Heart left ventricle (tissue), 16 donors: ENCODE measurements at regions of chr15 and their contacts with region 1.

Region 1: DNA sequence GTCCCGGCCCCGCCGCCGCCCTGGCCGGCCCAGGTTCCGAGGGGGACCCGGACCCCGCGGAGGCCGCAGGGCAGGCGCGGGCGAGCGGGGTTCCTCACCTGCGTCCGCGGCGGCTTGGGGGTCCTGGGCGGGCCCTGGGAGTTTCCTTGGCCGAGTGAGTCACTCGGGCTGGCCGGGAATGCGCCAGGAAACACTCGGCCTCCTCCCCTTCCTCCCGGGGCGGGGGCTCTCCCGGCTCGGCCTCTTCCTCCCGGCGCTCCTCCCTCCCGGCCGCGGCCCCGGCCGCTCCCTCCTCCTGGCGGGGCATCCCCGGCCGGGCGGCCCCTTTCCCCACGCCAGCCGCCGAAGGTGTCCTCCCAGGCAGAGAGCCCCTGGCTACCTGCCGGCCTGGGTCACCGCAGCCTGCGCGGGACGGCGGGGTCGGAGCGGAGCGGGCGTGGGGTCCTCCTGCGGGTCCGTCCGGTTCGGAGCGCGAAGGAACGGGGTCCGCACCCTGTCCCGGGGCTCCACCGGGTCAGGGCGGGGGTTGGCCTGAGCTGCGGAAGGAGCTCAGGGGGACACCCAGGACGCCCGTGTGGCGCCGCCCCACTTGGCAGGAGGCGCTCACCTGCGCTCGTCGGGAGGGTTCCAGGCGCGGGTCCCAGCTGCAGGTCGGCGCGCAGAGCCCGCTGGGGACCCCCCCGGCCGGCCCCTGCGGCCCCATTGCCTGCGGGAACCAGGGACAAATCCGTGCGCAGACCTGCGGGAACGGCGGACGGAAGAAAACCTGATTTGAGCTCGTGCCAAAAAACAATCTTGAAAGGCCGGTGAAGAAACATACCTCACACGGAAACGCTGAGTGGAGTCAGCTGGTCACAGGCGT is at the start of gene CYFIP1:
- DNase-seq: peak; percentile 90 to 93 (median 92)
- ATAC-seq: peak; percentile 94 to 97 (median 97)
- H3K4me3 ChIP-seq: peak within 1 kb of the TSS; percentile 70 to 99 (median 88)
- H3K27ac ChIP-seq: peak within 1 kb of the TSS; percentile 73 to 92 (median 86)
- H3K4me1 ChIP-seq: peaks cover 0 to 24% (median 9%) of the 10 kb centered on the region in 12 donors
- H3K27me3 ChIP-seq: no peaks in the 10 kb centered on the region
- CTCF ChIP-seq: no peak
- POLR2A ChIP-seq: peak in 1 of 2 donors; percentile 69
- total RNA-seq, gene CYFIP1: 23.4 to 111 (median 34.6) TPM

Region 2: DNA sequence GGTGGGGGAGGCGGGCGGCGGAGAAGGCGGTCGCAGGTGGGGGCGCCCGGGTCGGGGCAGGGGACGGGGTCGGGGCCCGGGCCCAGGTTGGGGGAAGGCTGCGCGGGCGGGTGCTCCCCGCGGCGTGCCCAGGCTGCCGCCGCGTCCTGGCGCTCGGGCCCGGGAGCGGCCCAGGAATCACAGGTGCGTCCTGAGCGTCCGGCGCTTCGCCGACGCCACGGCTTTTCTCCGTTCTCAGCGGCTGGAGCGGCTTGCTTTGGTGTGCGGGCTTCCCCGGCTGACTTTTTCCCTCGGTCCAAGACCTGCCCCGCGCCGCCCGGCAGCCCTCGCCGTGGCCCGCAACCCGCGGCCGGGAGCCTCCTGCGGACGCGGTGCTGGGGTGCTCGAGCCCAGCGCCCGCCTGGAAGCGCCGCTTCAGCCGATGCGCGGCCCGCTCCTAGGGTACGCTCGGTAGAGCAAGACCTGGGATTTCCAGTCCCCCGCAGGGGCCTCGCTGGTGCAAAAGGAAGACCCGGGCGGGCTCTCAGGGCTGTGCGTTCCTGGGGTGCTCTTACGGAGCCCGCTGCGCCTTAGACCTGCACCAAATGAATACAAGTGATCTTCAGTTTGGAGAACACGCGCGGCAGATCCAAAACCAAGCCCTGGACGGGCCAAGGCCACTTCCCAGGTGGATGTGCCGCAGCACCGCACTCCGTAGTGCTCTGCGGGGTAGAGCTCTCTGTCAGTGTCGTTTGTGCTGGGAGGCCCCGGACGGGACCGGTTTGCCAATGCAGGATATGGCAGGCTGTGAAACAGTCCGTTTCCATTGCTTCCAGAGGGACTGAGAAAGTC is 193.3 kb before region 1 on chr15:
- intact Hi-C with region 1: loop called in 1 of 10 experiments (anchors 10 kb)
- DNase-seq: peak in 4 of 5 donors; percentile 16 to 35 (median 26)
- ATAC-seq: peak in 3 of 4 donors; percentile 27 to 32 (median 29)
- H3K4me3 ChIP-seq: peak overlapping the region; percentile 62 to 97 (median 78)
- H3K27ac ChIP-seq: peak overlapping the region; percentile 53 to 97 (median 90)
- H3K4me1 ChIP-seq: peaks cover 0 to 15% (median 4%) of the 10 kb centered on the region in 12 donors
- H3K27me3 ChIP-seq: no peaks in the 10 kb centered on the region
- CTCF ChIP-seq: no peak
- POLR2A ChIP-seq: no peak

Region 3: GRCh38 chr15:22949074-22949547 is 31.3 kb before region 1 on chr15:
- intact Hi-C with region 1: loop called in 7 of 10 experiments (anchors 2 to 5 kb)
- DNase-seq: peak; percentile 72 to 89 (median 81)
- ATAC-seq: peak; percentile 67 to 91 (median 84)
- H3K4me3 ChIP-seq: peak overlapping the region in 8 of 12 donors; percentile 7 to 46 (median 26)
- H3K27ac ChIP-seq: peak overlapping the region in 11 of 12 donors; percentile 40 to 80 (median 65)
- H3K4me1 ChIP-seq: peaks cover 10 to 72% (median 51%) of the 10 kb centered on the region in 12 donors
- H3K27me3 ChIP-seq: no peaks in the 10 kb centered on the region
- CTCF ChIP-seq: no peak
- POLR2A ChIP-seq: no peak

Region 4: DNA sequence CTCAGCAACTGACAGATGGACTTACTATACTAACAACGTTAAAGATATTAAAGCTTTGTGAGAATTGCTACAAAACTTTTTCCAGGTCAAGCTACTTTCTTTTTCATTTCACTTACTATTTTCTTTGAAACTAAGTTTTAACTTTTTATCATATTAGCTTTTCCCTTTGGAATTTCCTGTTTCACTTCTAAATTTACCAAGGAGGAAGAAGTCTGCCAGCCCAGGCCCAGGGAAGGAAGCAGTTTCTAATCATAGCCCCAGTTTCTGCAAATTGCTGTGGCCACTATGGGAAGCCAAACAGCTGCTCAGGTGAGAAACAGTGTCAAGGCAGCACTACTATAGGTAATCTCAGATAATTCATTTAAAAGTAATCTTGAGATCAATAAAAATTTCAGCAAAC is 18.7 kb before region 1 on chr15:
- intact Hi-C with region 1: loop called in 2 of 10 experiments (anchors 2 kb)
- DNase-seq: peak in 1 of 5 donors; percentile 22
- ATAC-seq: peak in 1 of 4 donors; percentile 19
- H3K4me3 ChIP-seq: peak overlapping the region in 7 of 12 donors; percentile 2 to 29 (median 20)
- H3K27ac ChIP-seq: peak overlapping the region; percentile 10 to 84 (median 64)
- H3K4me1 ChIP-seq: peaks cover 19 to 84% (median 70%) of the 10 kb centered on the region in 12 donors
- H3K27me3 ChIP-seq: no peaks in the 10 kb centered on the region
- CTCF ChIP-seq: no peak
- POLR2A ChIP-seq: no peak

Region 5: DNA sequence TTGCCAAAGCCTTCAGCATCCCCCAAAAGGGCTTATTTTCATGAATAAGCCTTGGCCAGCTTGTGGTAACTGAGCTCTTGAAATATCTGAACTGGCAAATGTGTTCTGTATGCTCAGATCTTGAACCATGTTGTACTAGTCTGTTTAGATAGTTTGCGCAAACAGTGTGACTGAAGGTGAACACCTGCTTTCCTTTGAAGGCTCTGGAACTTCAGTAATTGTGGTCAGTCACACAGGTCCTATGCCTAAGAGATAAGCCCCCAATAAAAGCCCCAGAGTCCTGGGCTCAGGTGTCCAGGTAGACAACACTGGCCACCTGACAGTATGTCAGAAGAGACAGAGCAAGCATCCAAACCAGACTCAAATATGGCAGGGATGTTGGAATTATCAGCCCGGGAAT is 53.6 kb after region 1 on chr15:
- intact Hi-C with region 1: loop called in 3 of 10 experiments (anchors 5 to 10 kb)
- DNase-seq: no peak
- ATAC-seq: no peak
- H3K4me3 ChIP-seq: no peak overlapping the region
- H3K27ac ChIP-seq: no peak overlapping the region
- H3K4me1 ChIP-seq: peaks cover 0 to 14% (median 10%) of the 10 kb centered on the region in 12 donors
- H3K27me3 ChIP-seq: no peaks in the 10 kb centered on the region
- CTCF ChIP-seq: no peak
- POLR2A ChIP-seq: no peak

Region 6: DNA sequence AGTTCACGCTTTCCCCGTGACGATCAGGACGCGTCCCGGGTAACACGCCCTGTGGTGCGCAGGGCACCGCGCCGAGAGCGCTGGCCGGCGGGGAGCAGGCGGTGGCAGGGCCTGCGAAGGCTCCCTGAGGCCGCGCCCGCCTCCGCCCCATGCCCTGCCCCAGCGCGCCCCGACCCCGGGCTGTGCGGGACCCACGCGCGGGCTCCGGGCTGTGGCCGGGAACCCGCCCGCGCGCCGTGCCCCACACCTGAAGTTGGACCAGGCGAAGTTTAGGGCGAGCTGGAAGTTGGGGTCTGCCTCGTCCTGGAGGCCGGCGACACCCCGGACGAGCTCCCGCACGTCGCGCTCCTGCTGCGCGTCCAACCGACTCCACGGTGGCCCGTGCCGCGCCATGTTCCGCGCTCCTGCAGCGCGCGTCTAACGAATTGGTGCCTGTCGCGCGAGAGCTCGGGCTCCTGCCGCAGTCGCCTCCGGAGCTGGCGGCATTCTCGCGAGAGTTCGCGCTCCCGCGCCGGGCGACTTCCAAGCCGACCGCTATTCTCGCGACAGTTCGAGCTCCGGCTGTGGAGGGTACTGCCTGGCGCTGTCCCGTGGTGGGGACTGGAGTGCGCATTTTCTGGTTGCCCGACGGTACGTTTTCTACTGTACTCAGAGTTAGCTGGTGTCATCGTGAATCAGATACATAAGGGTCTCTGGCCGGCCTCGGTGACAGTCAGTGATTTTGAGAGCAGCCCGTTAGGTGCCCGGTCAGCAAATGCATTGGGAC is 58.9 kb after region 1 on chr15 and contains the start of gene TUBGCP5:
- intact Hi-C with region 1: loop called in 3 of 10 experiments (anchors 5 to 10 kb)
- DNase-seq: peak; percentile 97 to 99 (median 98)
- ATAC-seq: peak; percentile 97 to 99 (median 98)
- H3K4me3 ChIP-seq: peak within 1 kb of the TSS; percentile 57 to 92 (median 72)
- H3K27ac ChIP-seq: peak within 1 kb of the TSS; percentile 63 to 93 (median 80)
- H3K4me1 ChIP-seq: peaks cover 0 to 17% (median 12%) of the 10 kb centered on the region in 12 donors
- H3K27me3 ChIP-seq: no peaks in the 10 kb centered on the region
- CTCF ChIP-seq: peak in 10 of 12 donors; percentile 14 to 56 (median 40)
- POLR2A ChIP-seq: peak; percentile 17 to 94
- total RNA-seq, gene TUBGCP5: 9.5 to 14.7 (median 13.2) TPM